ENCODE measurements at regions of chr19 and their contacts with region 1.

Region 1: GRCh38 chr19:38647368-38647965 is at the start of gene ACTN4:
- DNase-seq: peak; percentile 78
- ATAC-seq: peak; percentile 91
- H3K4me3 ChIP-seq: peak within 1 kb of the TSS; percentile 100
- H3K27ac ChIP-seq: peak within 1 kb of the TSS; percentile 79
- H3K4me1 ChIP-seq: peaks cover 13% of the 10 kb centered on the region
- H3K27me3 ChIP-seq: no peaks in the 10 kb centered on the region
- CTCF ChIP-seq: no peak
- EP300 ChIP-seq: no peak
- POLR2A ChIP-seq: peak; percentile 99
- RAD21 ChIP-seq: no peak
- polyA plus RNA-seq, gene ACTN4: 2.4 to 6.7 TPM

Region 2: GRCh38 chr19:38685666-38686529 is 38.4 kb after region 1 on chr19:
- CTCF ChIA-PET with region 1: interaction called, 6 read pairs
- POLR2A ChIA-PET with region 1: interaction called, 8 read pairs
- RAD21 ChIA-PET with region 1: interaction called, 4 read pairs
- SMC1A ChIA-PET with region 1: interaction called, 5 read pairs
- in situ Hi-C with region 1: no loop called
- intact Hi-C with region 1: loop called (anchors 5 kb)
- DNase-seq: no peak
- ATAC-seq: peak; percentile 52
- H3K4me3 ChIP-seq: peak overlapping the region; percentile 12; the same call in 1 of the 2 replicates
- H3K27ac ChIP-seq: peak overlapping the region; percentile 70
- H3K4me1 ChIP-seq: peaks cover 49% of the 10 kb centered on the region
- H3K27me3 ChIP-seq: no peaks in the 10 kb centered on the region
- CTCF ChIP-seq: peak in 2 of 3 experiments; percentile 34 to 52; a peak in 4 of 6 replicates
- EP300 ChIP-seq: no peak
- POLR2A ChIP-seq: no peak
- RAD21 ChIP-seq: 0 out of 2 replicates have a peak, but pooled peaks have one; percentile 3